Psoas muscle (tissue), 8 donors: ENCODE measurements at regions of chr3 and their contacts with region 1.

Region 1: DNA sequence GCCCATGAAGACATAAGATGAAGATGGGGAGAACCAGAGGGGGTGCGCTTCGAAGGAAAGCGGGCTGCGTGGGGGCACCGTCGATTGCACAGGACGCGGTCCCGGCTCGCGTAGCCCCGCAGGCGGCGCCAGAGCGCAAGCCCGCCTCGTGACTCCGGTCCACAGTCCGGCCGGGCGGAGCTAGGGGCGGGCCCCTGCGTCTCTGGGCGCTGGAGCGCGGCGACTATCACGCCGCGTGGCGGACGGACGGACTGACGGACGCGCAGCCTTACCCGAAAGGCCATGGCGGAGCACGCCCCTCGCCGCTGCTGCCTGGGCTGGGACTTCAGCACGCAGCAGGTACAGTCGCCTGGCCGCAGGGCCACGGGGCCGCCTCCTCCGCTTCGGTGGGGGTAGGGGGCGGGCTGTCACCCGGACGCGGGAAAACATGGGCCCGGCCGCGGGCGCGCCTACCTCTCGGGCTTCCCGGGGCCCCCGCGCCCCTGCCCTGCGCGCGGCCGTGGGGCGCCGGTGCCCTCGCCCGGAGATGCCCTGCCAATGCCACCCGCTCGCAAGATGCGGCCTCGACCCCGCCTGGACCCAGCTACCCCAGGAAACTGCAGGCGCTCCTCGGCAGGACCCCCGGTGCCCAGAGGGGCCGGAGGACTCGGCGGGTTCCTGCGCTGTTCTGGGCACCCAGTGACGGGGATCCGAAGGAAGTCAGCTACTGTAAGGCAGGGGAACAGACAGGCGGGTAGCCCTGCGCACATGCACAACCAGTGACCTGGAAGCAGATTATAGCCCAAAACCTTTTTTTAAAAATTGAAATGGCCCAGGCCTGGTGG is at the start of gene XYLB:
- DNase-seq: peak; percentile 90 to 92
- ATAC-seq: peak; percentile 99 to 100 (median 99)
- H3K4me3 ChIP-seq: peak within 1 kb of the TSS; percentile 88
- H3K27ac ChIP-seq: peak within 1 kb of the TSS; percentile 44
- H3K4me1 ChIP-seq: peaks cover 5% of the 10 kb centered on the region
- H3K27me3 ChIP-seq: no peaks in the 10 kb centered on the region
- CTCF ChIP-seq: peak; percentile 84
- total RNA-seq, gene XYLB: 0.78 to 1.3 (median 1.3) TPM

Region 2: GRCh38 chr3:38460377-38461270 is 113.8 kb after region 1 on chr3:
- intact Hi-C with region 1: loop called in 1 of 2 experiments (anchors 5 kb)
- DNase-seq: peak; percentile 49 to 82
- ATAC-seq: peak; percentile 87 to 90 (median 88)
- H3K4me3 ChIP-seq: peak overlapping the region; percentile 72
- H3K27ac ChIP-seq: peak overlapping the region; percentile 96
- H3K4me1 ChIP-seq: peaks cover 78% of the 10 kb centered on the region
- H3K27me3 ChIP-seq: no peaks in the 10 kb centered on the region
- CTCF ChIP-seq: no peak

Region 3: DNA sequence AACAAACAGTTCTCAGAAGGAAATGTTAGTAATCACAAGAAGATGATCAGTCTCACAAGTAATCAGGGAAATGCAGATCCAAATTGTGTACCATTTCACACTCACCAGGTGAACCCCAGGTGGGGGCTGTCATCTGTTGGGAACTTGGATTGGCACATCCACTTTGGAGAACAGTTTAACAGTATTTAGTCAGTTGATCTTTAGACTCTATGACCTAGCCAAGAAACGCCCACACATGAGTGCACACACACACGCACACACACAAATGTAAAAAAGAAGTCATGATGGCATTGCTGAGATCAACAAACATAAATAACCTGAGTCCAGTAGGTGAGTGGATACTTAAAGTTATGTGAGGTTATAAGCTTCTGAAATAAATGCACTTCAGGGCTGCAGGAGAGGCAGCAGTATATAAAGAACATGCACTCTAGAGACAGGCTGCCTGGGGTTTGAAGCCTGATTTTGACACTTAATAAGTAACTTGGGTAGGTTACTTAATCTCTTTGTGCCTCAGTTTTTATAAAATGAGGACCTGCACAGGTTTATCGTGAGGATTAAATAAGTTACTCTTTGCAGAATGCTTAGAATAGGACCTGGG is 124.6 kb after region 1 on chr3:
- intact Hi-C with region 1: no loop called
- DNase-seq: no peak
- ATAC-seq: peak in 3 of 4 donors; percentile 37 to 69 (median 63)
- H3K4me3 ChIP-seq: no peak overlapping the region
- H3K27ac ChIP-seq: no peak overlapping the region
- H3K4me1 ChIP-seq: peaks cover 48% of the 10 kb centered on the region
- H3K27me3 ChIP-seq: no peaks in the 10 kb centered on the region
- CTCF ChIP-seq: no peak